ENCODE measurements at regions of chr6 and their contacts with region 1.

Region 1: GRCh38 chr6:133916650-133917151 is 27.8 kb downstream of the TCF21 start:
- DNase-seq: peak; percentile 54 to 94 (median 78)
- ATAC-seq: peak; percentile 50 to 95 (median 88)
- H3K4me3 ChIP-seq: no peak overlapping the region
- H3K27ac ChIP-seq: no peak overlapping the region
- H3K4me1 ChIP-seq: no peaks in the 10 kb centered on the region
- H3K27me3 ChIP-seq: no peaks in the 10 kb centered on the region
- CTCF ChIP-seq: peak; percentile 48 to 74 (median 72)

Region 2: DNA sequence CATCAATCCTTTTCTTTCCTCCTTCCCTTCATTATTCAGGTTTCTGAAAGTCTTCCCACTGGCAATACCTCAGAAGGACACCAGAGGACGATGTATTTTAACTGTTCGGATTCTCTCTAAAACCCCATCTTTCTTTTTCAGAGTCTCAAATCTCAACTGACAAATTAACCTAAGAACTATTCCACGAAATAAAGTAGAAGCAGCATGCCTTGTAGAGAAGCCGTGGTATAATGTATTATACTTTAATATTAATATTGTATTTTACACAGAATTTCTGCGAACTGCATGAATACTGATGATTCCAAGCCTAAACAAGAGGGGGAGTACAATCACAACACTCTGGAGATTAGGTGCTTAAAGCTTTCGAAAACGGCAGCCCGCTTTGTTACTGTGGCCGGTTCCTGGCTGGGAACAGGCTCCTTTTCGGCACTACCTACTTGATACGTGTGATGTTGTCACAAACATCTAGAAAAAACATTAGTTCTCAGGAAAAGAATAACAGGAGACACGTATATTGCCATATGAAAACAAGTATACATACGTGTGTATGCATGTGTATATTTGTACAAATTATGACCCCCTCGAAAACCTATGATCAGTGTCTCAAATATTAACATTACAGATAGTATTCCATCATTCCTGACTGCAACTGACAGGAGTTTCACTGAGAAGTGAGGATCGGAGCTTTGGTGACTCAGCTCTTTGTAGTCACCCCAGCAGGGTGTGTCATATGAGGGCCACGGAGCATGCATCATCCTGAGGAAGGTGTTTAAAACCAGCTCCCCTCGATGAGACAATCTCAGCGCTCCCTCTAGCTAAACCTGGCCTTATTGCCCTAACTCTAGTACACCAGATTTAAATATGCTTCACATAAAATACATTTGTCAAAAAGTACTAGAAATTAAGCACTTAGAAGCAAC is 347.5 kb before region 1 on chr6:
- intact Hi-C with region 1: loop called in 2 of 3 experiments (anchors 5 to 10 kb)
- DNase-seq: no peak
- ATAC-seq: peak; percentile 53 to 92 (median 85)
- H3K4me3 ChIP-seq: peak overlapping the region in 1 of 4 donors; percentile 23
- H3K27ac ChIP-seq: no peak overlapping the region
- H3K4me1 ChIP-seq: no peaks in the 10 kb centered on the region
- H3K27me3 ChIP-seq: peaks cover 0 to 3% (median 0%) of the 10 kb centered on the region in 4 donors
- CTCF ChIP-seq: peak; percentile 44 to 79 (median 73)

Region 3: GRCh38 chr6:133827766-133828165 is 88.9 kb before region 1 on chr6:
- intact Hi-C with region 1: no loop called
- DNase-seq: no peak
- ATAC-seq: no peak
- H3K4me3 ChIP-seq: no peak overlapping the region
- H3K27ac ChIP-seq: no peak overlapping the region
- H3K4me1 ChIP-seq: no peaks in the 10 kb centered on the region
- H3K27me3 ChIP-seq: peaks cover 0 to 8% (median 0%) of the 10 kb centered on the region in 4 donors
- CTCF ChIP-seq: no peak

Region 4: GRCh38 chr6:133952815-133953633 is 36.3 kb after region 1 on chr6 and contains the start of gene TBPL1:
- intact Hi-C with region 1: no loop called
- DNase-seq: peak; percentile 86 to 93 (median 89)
- ATAC-seq: peak; percentile 95 to 98 (median 96)
- H3K4me3 ChIP-seq: peak within 1 kb of the TSS; percentile 75 to 92 (median 88)
- H3K27ac ChIP-seq: peak within 1 kb of the TSS; percentile 86 to 94 (median 90)
- H3K4me1 ChIP-seq: peaks cover 10 to 29% (median 24%) of the 10 kb centered on the region in 3 donors
- H3K27me3 ChIP-seq: no peaks in the 10 kb centered on the region
- CTCF ChIP-seq: no peak
- total RNA-seq, gene TBPL1: 6.5 to 13.4 (median 9.1) TPM

Region 5: DNA sequence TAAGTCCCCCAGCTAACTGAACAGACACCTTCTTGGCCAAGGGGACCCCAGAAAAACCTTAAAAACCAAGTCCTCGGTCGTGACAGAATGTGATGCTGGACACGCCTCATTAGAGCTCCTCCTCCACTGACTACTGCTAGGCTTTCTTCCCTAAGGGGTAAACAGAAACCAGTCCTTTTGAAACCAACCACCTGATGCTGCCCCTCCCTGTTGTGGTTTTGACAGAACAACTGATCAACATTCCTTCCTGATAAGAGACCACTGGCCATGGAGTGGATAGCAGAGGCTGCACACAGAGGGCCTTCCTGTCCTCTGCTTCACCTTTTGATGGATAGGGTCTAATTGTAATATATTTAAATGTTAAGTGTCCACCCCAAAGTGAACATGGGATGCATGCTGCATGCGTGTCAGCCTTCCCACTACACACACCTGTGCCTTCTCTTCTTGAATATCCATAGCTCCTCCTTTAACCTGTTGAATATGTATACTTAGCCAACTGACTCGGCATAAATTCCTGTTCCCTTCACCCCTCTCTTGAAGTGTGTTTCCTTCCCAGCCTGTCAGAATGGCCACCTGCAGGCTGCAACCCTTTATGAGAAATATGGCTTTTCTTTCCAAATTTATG is 163.6 kb after region 1 on chr6:
- intact Hi-C with region 1: no loop called
- DNase-seq: no peak
- ATAC-seq: no peak
- H3K4me3 ChIP-seq: no peak overlapping the region
- H3K27ac ChIP-seq: no peak overlapping the region
- H3K4me1 ChIP-seq: no peaks in the 10 kb centered on the region
- H3K27me3 ChIP-seq: no peaks in the 10 kb centered on the region
- CTCF ChIP-seq: no peak